CD8-positive, alpha-beta T cell (primary cell): ENCODE measurements at regions of chr11 and their contacts with region 1.

Region 1: GRCh38 chr11:111652184-111652583 is 49.9 kb downstream of the SIK2 start:
- DNase-seq: no peak
- ATAC-seq: no peak
- H3K4me3 ChIP-seq: no peak overlapping the region
- H3K4me3 Mint-ChIP-seq: no peak overlapping the region
- H3K27ac ChIP-seq: no peak overlapping the region
- H3K27ac Mint-ChIP-seq: no peak overlapping the region
- H3K4me1 ChIP-seq: no peaks in the 10 kb centered on the region
- H3K4me1 Mint-ChIP-seq: no peaks in the 10 kb centered on the region
- H3K27me3 ChIP-seq: no peaks in the 10 kb centered on the region
- H3K27me3 Mint-ChIP-seq: no peaks in the 10 kb centered on the region
- CTCF ChIP-seq: no peak

Region 2: DNA sequence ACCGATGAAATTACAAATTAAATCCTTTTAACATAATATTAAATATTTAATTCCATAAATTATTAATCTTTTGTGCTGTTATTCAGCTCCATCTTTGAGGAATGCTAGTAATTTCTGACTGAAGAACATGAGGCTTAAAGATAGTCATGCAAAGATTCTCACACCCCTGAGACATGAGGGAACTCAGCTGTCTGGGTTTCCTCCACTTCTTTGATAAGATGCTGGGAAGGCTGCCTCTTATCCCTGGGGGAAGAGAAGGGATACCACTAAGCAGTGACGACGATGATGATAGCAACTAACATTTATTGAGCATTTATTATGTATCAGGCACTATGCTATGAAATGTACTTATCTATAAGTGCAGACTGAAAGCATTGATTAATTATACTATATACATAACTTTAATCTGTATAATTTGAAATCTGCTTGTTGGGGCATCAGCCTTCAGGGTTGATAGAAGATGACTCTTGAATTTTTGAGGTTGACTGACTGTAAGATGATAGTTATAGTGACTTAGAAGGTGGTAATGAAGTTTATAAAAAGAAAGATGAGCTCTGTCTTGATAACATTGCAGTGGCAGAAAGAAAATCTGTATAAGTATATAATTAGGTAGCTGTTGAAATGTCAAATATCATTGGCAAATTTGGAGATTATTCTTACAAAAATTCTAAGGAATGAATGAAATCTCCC is 28.4 kb after region 1 on chr11:
- CTCF ChIA-PET with region 1: no interaction called
- POLR2A ChIA-PET with region 1: no interaction called
- intact Hi-C with region 1: loop called in 1 of 2 experiments (anchors 1 kb)
- DNase-seq: no peak
- ATAC-seq: no peak
- H3K4me3 ChIP-seq: no peak overlapping the region
- H3K4me3 Mint-ChIP-seq: no peak overlapping the region
- H3K27ac ChIP-seq: no peak overlapping the region
- H3K27ac Mint-ChIP-seq: no peak overlapping the region
- H3K4me1 ChIP-seq: no peaks in the 10 kb centered on the region
- H3K4me1 Mint-ChIP-seq: peaks cover 2% of the 10 kb centered on the region
- H3K27me3 ChIP-seq: no peaks in the 10 kb centered on the region
- H3K27me3 Mint-ChIP-seq: no peaks in the 10 kb centered on the region
- CTCF ChIP-seq: no peak

Region 3: GRCh38 chr11:111737444-111738210 is 85.4 kb after region 1 on chr11:
- CTCF ChIA-PET with region 1: no interaction called
- POLR2A ChIA-PET with region 1: no interaction called
- intact Hi-C with region 1: no loop called
- DNase-seq: no peak
- ATAC-seq: peak; percentile 31
- H3K4me3 ChIP-seq: no peak overlapping the region
- H3K4me3 Mint-ChIP-seq: no peak overlapping the region
- H3K27ac ChIP-seq: no peak overlapping the region
- H3K27ac Mint-ChIP-seq: peak overlapping the region; percentile 32
- H3K4me1 ChIP-seq: no peaks in the 10 kb centered on the region
- H3K4me1 Mint-ChIP-seq: peaks cover 8% of the 10 kb centered on the region
- H3K27me3 ChIP-seq: no peaks in the 10 kb centered on the region
- H3K27me3 Mint-ChIP-seq: no peaks in the 10 kb centered on the region
- CTCF ChIP-seq: no peak

Region 4: DNA sequence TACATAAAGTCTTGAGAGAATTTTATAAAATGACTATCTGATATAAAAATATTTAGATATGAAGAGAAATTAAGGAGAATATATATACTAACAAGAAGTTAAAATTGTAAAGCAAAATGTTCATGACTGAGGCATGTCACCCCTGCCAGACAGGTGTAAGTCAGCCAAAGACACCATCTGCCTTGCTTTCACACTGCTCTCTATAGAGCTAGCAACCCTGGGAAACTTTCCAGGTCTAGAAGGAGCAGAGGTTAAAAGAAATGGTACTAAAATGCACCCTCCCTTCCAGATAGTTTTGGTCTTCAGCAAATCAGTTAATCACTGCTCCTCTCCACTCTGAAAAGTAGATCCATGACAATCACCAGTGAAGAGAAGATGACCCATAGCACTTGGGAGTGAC is 97.5 kb after region 1 on chr11:
- CTCF ChIA-PET with region 1: no interaction called
- POLR2A ChIA-PET with region 1: no interaction called
- intact Hi-C with region 1: no loop called
- DNase-seq: no peak
- ATAC-seq: no peak
- H3K4me3 ChIP-seq: no peak overlapping the region
- H3K4me3 Mint-ChIP-seq: no peak overlapping the region
- H3K27ac ChIP-seq: no peak overlapping the region
- H3K27ac Mint-ChIP-seq: no peak overlapping the region
- H3K4me1 ChIP-seq: no peaks in the 10 kb centered on the region
- H3K4me1 Mint-ChIP-seq: no peaks in the 10 kb centered on the region
- H3K27me3 ChIP-seq: no peaks in the 10 kb centered on the region
- H3K27me3 Mint-ChIP-seq: no peaks in the 10 kb centered on the region
- CTCF ChIP-seq: no peak